Sciatic nerve (tissue), 2 donors: ENCODE measurements at regions of chr11 and their contacts with region 1.

Region 1: DNA sequence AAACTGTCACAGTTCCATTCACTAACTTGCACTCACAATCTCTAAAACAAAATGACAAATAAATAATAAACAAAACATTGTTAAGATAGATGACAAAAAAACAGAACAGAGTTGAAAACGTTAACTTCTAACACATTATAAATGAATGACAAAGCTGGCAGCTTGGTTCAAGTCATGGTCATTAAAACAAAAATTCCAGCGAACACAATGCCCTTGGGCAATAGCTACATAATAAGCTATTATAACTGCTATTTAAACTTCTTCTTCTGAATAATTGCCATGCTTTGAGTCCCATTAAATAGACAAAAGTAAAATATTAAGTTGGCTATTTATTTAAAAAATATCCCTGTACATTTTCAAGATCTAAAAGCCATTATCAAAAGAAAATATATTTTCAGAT is 54.7 kb downstream of the PICALM start:
- DNase-seq: no peak
- ATAC-seq: no peak

Region 2: GRCh38 chr11:86041975-86042378 is 27.8 kb after region 1 on chr11:
- intact Hi-C with region 1: loop called (anchors 5 kb)
- DNase-seq: no peak
- ATAC-seq: peak; percentile 91